Left ventricle myocardium inferior (tissue), 1 donor: ENCODE measurements at regions of chr13 and their contacts with region 1.

Region 1: GRCh38 chr13:106919638-106920037 is 351.7 kb upstream of the ARGLU1 start:
- DNase-seq: peak; percentile 63
- H3K4me3 ChIP-seq: peak overlapping the region; percentile 67
- H3K27ac ChIP-seq: peak overlapping the region; percentile 91
- H3K4me1 ChIP-seq: peaks cover 27% of the 10 kb centered on the region
- H3K27me3 ChIP-seq: peaks cover 13% of the 10 kb centered on the region
- CTCF ChIP-seq: no peak

Region 2: GRCh38 chr13:107124730-107125129 is 205.1 kb after region 1 on chr13:
- intact Hi-C with region 1: loop called (anchors 5 kb)
- DNase-seq: no peak
- H3K4me3 ChIP-seq: no peak overlapping the region
- H3K27ac ChIP-seq: no peak overlapping the region
- H3K4me1 ChIP-seq: peaks cover 7% of the 10 kb centered on the region
- H3K27me3 ChIP-seq: no peaks in the 10 kb centered on the region
- CTCF ChIP-seq: no peak